Mammary epithelial cell (primary cell): ENCODE measurements at regions of chr4 and their contacts with region 1.

Region 1: GRCh38 chr4:17583941-17584340 is 6.9 kb downstream of the LAP3 start:
- DNase-seq: no peak
- H3K4me3 ChIP-seq: no peak overlapping the region
- H3K27ac ChIP-seq: no peak overlapping the region
- H3K4me1 ChIP-seq: no peaks in the 10 kb centered on the region
- H3K27me3 ChIP-seq: no peaks in the 10 kb centered on the region
- CTCF ChIP-seq: no peak

Region 2: DNA sequence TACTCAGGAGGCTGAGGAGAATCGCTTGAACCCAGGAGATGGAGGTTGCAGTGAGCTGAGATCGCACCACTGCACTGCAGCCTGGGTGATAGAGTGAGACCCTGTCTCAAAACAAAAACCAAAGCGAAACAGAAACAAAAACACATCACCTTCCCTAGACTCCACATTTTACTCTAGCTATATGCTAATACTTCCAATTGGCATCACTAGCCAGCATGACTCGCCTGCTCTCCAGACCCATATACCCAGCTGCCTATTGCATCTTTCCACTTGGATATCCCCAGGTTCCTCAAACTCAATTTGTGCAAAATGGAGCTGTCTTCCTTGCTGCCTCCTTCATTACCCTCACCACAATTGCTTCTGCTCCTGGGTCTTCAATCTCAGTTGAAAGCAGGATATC is 29.4 kb before region 1 on chr4:
- CTCF ChIA-PET with region 1: interaction called, 20 read pairs
- dilution Hi-C with region 1: no loop called
- in situ Hi-C with region 1: no loop called
- intact Hi-C with region 1: no loop called
- DNase-seq: no peak
- H3K4me3 ChIP-seq: no peak overlapping the region
- H3K27ac ChIP-seq: no peak overlapping the region
- H3K4me1 ChIP-seq: no peaks in the 10 kb centered on the region
- H3K27me3 ChIP-seq: peaks cover 4% of the 10 kb centered on the region
- CTCF ChIP-seq: no peak

Region 3: GRCh38 chr4:17981063-17981462 is 397.1 kb after region 1 on chr4:
- CTCF ChIA-PET with region 1: no interaction called
- dilution Hi-C with region 1: no loop called
- in situ Hi-C with region 1: no loop called
- intact Hi-C with region 1: no loop called
- DNase-seq: no peak
- H3K4me3 ChIP-seq: no peak overlapping the region
- H3K27ac ChIP-seq: no peak overlapping the region
- H3K4me1 ChIP-seq: no peaks in the 10 kb centered on the region
- H3K27me3 ChIP-seq: no peaks in the 10 kb centered on the region
- CTCF ChIP-seq: no peak